ENCODE measurements at regions of chr12 and their contacts with region 1.

Region 1: DNA sequence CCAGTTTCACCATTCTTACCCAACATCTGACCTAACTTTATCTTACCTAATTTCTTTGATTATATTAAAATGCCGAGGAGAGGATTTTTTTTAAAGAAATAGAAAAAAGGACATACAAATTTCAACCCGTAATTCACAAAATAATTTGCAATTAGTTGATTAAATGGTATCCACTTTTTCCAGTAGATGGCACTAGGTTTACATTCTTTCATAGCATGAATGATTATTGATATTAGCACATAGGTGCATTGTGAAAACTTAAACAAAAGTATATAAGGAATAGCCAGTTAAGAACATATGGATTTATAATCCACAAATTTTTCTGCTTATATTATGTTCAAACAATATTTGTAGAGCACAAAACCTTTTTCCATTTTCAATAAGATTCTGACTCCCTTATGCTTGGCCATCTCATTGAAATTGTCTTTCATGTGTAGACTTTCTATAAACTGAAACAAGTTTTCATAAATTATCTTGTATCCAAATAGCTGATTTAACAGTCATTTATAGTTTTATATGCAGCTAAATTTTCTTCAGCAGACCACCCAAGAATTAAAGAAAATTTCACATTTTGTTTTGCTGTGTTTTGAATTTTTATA is 35.3 kb downstream of the MSRB3 start:
- DNase-seq: peak; percentile 52
- H3K4me3 Mint-ChIP-seq: no peak overlapping the region
- H3K27ac Mint-ChIP-seq: no peak overlapping the region
- H3K4me1 Mint-ChIP-seq: peaks cover 12% of the 10 kb centered on the region
- H3K27me3 Mint-ChIP-seq: no peaks in the 10 kb centered on the region
- CTCF ChIP-seq: peak; percentile 66

Region 2: GRCh38 chr12:65695113-65695865 is 381.5 kb after region 1 on chr12:
- CTCF ChIA-PET with region 1: no interaction called
- POLR2A ChIA-PET with region 1: no interaction called
- intact Hi-C with region 1: loop called (anchors 5 kb)
- DNase-seq: peak; percentile 96
- H3K4me3 Mint-ChIP-seq: peak overlapping the region; percentile 34
- H3K27ac Mint-ChIP-seq: peak overlapping the region; percentile 70
- H3K4me1 Mint-ChIP-seq: peaks cover 37% of the 10 kb centered on the region
- H3K27me3 Mint-ChIP-seq: no peaks in the 10 kb centered on the region
- CTCF ChIP-seq: no peak

Measured in MCF 10A (cell line).